CD8-positive, alpha-beta T cell (primary cell): ENCODE measurements at regions of chr1 and their contacts with region 1.

Region 1: DNA sequence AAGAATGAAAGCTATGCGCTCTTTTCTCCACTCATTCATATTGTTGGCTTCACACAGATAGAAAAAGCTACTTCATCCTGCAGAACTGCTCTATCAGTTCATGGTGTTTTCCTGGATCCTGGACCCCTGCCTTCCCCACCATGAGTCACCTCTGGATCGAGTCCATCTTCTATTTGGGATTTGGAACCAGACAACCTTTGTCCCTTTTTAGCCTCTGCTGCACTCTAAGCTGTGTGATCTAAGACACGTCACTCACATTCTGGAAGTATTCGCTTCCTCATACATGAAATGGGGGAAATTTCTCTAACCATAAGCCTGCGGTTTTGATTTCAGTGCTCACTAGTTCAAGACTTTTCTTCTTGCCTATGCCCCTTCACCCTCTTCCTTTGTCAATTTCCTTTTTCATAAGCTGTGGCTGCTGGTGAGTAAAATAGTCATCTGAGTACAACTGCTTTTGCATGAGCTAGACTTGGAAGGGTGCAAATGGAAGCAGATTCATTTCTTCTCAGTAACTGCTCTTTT is 14.1 kb upstream of the DEGS1 start:
- DNase-seq: peak in 5 of 9 experiments; percentile 9 to 84 (median 25)
- ATAC-seq: peak; percentile 86
- H3K4me3 ChIP-seq: no peak overlapping the region
- H3K4me3 Mint-ChIP-seq: peak overlapping the region; percentile 33
- H3K27ac ChIP-seq: no peak overlapping the region
- H3K27ac Mint-ChIP-seq: peak overlapping the region; percentile 49
- H3K4me1 ChIP-seq: peaks cover 29% of the 10 kb centered on the region
- H3K4me1 Mint-ChIP-seq: peaks cover 31% of the 10 kb centered on the region
- H3K27me3 ChIP-seq: no peaks in the 10 kb centered on the region
- H3K27me3 Mint-ChIP-seq: no peaks in the 10 kb centered on the region
- CTCF ChIP-seq: no peak

Region 2: GRCh38 chr1:224234017-224234416 is 65.1 kb after region 1 on chr1:
- CTCF ChIA-PET with region 1: interaction called, 3 read pairs
- POLR2A ChIA-PET with region 1: no interaction called
- intact Hi-C with region 1: loop called in 1 of 2 experiments (anchors 5 kb)
- DNase-seq: no peak
- ATAC-seq: no peak
- H3K4me3 ChIP-seq: no peak overlapping the region
- H3K4me3 Mint-ChIP-seq: no peak overlapping the region
- H3K27ac ChIP-seq: no peak overlapping the region
- H3K27ac Mint-ChIP-seq: peak overlapping the region; percentile 13
- H3K4me1 ChIP-seq: no peaks in the 10 kb centered on the region
- H3K4me1 Mint-ChIP-seq: no peaks in the 10 kb centered on the region
- H3K27me3 ChIP-seq: no peaks in the 10 kb centered on the region
- H3K27me3 Mint-ChIP-seq: no peaks in the 10 kb centered on the region
- CTCF ChIP-seq: no peak